Activated CD8-positive, alpha-beta memory T cell treated with anti-CD3 and anti-CD28 coated beads, Interleukin-2, amount 10 ng/mL, durations not matched to agents 7 days and 5 days (primary cell): ENCODE measurements at regions of chr17 and their contacts with region 1.

Region 1: GRCh38 chr17:49180303-49180702 is 30.1 kb downstream of the GNGT2 start:
- DNase-seq: peak; percentile 69
- ATAC-seq: peak; percentile 71
- H3K4me3 Mint-ChIP-seq: no peak overlapping the region
- H3K27ac Mint-ChIP-seq: no peak overlapping the region
- H3K4me1 Mint-ChIP-seq: peaks cover 11% of the 10 kb centered on the region
- H3K27me3 Mint-ChIP-seq: peaks cover 4% of the 10 kb centered on the region

Region 2: DNA sequence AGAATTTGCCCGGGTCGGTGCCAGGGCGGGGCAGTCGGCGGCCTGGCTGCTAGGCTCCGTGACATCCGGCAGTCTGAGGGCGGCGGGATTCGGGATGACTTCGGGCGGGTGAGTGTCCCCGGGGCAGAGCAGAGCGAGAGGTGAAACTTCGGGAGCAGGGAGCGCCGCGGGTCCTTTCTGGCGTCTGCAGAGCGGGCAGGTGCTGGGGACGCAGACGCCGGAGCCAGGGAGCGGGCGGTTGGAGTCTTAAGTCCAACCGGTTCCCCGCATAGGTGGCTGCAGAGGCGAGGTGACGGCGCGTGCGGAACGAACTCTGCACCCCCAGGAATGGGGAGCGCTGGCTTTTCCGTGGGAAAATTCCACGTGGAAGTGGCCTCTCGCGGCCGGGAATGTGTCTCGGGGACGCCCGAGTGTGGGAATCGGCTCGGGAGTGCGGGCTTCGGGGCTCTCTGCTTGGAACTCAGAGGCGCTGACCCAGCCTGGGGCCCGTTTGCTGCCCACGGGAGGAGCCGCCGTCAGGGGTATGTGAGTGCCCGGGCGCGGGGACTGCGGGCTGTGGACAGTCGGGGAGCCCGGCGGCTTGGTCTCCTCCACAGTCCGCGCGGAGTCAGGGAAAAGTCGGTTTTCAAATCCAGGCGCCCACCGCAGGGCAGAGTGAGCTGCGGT is 47.5 kb before region 1 on chr17 and contains the start of gene B4GALNT2:
- CTCF ChIA-PET with region 1: no interaction called
- DNase-seq: no peak
- ATAC-seq: peak; percentile 33
- H3K4me3 Mint-ChIP-seq: peak within 1 kb of the TSS; percentile 2
- H3K27ac Mint-ChIP-seq: no peak within 1 kb of the TSS
- H3K4me1 Mint-ChIP-seq: peaks cover 3% of the 10 kb centered on the region
- H3K27me3 Mint-ChIP-seq: peaks cover 72% of the 10 kb centered on the region
- total RNA-seq, gene B4GALNT2: 0.02 to 0.03 TPM

Region 3: GRCh38 chr17:49191917-49192741 is 11.8 kb after region 1 on chr17:
- CTCF ChIA-PET with region 1: interaction called, 56 read pairs
- DNase-seq: peak; percentile 95
- ATAC-seq: peak; percentile 56
- H3K4me3 Mint-ChIP-seq: peak overlapping the region; percentile 88
- H3K27ac Mint-ChIP-seq: peak overlapping the region; percentile 97
- H3K4me1 Mint-ChIP-seq: peaks cover 53% of the 10 kb centered on the region
- H3K27me3 Mint-ChIP-seq: no peaks in the 10 kb centered on the region

Region 4: GRCh38 chr17:49217651-49218413 is 37.5 kb after region 1 on chr17:
- CTCF ChIA-PET with region 1: interaction called, 22 read pairs
- DNase-seq: peak; percentile 93
- ATAC-seq: peak; percentile 61
- H3K4me3 Mint-ChIP-seq: peak overlapping the region; percentile 65
- H3K27ac Mint-ChIP-seq: peak overlapping the region; percentile 98
- H3K4me1 Mint-ChIP-seq: peaks cover 80% of the 10 kb centered on the region
- H3K27me3 Mint-ChIP-seq: no peaks in the 10 kb centered on the region

Region 5: GRCh38 chr17:49230636-49231562 is 50.6 kb after region 1 on chr17 and contains the start of gene PHOSPHO1:
- CTCF ChIA-PET with region 1: interaction called, 176 read pairs
- DNase-seq: peak; percentile 90
- ATAC-seq: peak; percentile 91
- H3K4me3 Mint-ChIP-seq: peak within 1 kb of the TSS; percentile 62
- H3K27ac Mint-ChIP-seq: no peak within 1 kb of the TSS
- H3K4me1 Mint-ChIP-seq: peaks cover 34% of the 10 kb centered on the region
- H3K27me3 Mint-ChIP-seq: peaks cover 30% of the 10 kb centered on the region
- total RNA-seq, gene PHOSPHO1: not detected